PC-3 (cell line): ENCODE measurements at regions of chr3 and their contacts with region 1.

Region 1: GRCh38 chr3:134357261-134358184 is 16.7 kb downstream of the AMOTL2 start:
- DNase-seq: peak; percentile 91
- ATAC-seq: peak; percentile 88
- H3K4me3 ChIP-seq: no peak overlapping the region
- H3K27ac ChIP-seq: peak overlapping the region; percentile 76
- H3K4me1 ChIP-seq: peaks cover 47% of the 10 kb centered on the region
- H3K27me3 ChIP-seq: no peaks in the 10 kb centered on the region
- CTCF ChIP-seq: no peak

Region 2: DNA sequence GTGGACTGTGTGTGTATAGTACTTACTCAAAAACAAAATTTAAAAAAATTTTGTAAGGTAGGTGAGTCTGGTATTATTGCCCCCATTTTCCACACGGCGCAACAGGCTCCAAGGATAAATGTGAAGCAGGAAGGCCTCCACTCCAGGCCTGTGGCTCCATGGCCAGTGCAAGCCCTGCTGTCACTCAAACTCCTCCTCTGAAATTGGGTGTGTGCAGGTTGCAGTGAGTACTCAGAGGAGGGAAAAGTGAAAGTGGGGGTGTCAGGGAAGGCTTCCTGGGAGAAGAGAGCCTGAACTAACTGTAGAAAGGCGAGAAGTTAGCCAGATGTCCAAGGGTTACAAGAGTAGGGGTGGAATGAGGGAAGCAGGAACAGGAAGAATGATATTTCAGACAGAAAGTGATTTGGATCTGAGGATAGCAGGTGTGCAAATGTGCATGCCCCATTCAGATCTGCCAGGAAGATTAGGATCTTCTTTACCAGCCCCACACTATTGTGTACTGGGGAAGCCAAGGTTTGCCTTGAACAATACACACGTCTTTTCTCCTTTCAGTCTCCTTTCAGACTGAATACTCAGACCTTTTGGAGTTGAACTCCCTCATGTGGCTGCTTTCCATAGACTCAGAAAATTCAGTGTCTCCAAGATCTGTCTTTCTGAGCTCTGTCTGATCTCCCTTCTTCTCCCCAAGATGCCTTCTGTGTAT is 58.2 kb before region 1 on chr3:
- CTCF ChIA-PET with region 1: no interaction called
- POLR2A ChIA-PET with region 1: no interaction called
- intact Hi-C with region 1: no loop called
- DNase-seq: peak; percentile 43
- ATAC-seq: peak; percentile 74
- H3K4me3 ChIP-seq: no peak overlapping the region
- H3K27ac ChIP-seq: no peak overlapping the region
- H3K4me1 ChIP-seq: no peaks in the 10 kb centered on the region
- H3K27me3 ChIP-seq: no peaks in the 10 kb centered on the region
- CTCF ChIP-seq: peak; percentile 35; the same call in 1 of the 2 replicates

Region 3: DNA sequence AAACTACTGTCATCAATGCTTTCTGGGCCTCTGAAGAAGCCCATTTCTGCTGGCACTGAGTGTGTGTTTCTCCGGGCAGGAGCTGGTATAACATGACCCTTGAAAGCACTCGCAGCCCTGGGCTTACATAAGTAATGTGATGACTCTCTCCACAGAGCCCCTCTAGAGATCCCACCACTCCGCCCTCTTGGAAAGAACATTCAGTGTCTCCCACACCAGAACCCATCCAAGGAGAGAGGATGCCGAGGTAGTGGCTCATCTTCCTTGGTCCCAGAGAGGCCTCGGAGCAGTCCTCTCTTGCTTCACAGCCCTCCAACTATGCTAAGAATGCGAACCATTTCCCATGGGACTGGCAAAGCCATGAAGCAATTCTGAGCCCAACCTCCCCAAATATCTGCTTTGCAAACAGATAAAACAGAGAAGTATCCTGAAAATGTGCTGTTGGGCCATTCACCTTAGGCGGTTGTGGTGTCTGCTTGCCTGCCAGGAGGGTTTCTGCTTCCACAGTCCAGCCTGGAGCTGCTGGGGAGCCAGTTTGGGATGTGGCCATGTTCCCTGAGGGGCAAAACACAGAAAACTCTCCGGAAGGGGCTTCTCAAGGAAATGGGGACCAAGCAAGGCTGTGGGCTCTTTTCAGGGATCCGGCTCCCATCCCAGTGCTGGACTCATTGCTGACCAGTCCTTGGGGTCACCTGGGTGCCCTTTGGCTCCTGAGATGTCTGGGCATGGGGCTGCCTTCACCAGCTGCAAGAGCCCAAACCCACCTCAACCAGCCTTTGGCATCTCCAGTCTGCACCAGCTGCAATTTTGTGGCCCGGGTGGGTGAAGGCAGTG is 30.5 kb before region 1 on chr3:
- CTCF ChIA-PET with region 1: no interaction called
- POLR2A ChIA-PET with region 1: no interaction called
- intact Hi-C with region 1: loop called (anchors 1 kb)
- DNase-seq: peak; percentile 87
- ATAC-seq: peak; percentile 45
- H3K4me3 ChIP-seq: peak overlapping the region; percentile 35; the same call in 1 of the 2 replicates
- H3K27ac ChIP-seq: peak overlapping the region; percentile 88
- H3K4me1 ChIP-seq: peaks cover 58% of the 10 kb centered on the region
- H3K27me3 ChIP-seq: no peaks in the 10 kb centered on the region
- CTCF ChIP-seq: no peak

Region 4: DNA sequence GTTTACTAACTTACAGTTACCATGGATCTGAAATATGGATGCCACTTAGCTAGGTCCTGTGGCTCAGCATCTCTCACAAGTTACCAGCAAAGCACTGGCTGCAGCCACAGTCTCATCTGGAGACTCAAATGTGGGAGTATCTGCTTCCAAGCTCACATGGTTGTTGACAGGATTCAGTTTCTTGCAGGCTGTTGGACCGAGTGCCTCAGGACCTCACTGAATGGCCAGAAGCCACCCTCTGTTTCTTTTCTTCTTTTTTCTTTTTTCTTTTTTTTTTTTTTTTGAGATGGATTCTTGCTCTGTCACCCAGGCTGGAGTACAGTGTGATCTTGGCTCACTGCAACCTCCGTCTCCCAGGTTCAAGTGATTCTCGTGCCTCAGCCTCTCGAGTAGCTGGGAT is 36.9 kb after region 1 on chr3:
- CTCF ChIA-PET with region 1: no interaction called
- POLR2A ChIA-PET with region 1: no interaction called
- intact Hi-C with region 1: no loop called
- DNase-seq: no peak
- ATAC-seq: no peak
- H3K4me3 ChIP-seq: no peak overlapping the region
- H3K27ac ChIP-seq: no peak overlapping the region
- H3K4me1 ChIP-seq: no peaks in the 10 kb centered on the region
- H3K27me3 ChIP-seq: no peaks in the 10 kb centered on the region
- CTCF ChIP-seq: no peak